ENCODE measurements at regions of chr11 and their contacts with region 1.

Region 1: DNA sequence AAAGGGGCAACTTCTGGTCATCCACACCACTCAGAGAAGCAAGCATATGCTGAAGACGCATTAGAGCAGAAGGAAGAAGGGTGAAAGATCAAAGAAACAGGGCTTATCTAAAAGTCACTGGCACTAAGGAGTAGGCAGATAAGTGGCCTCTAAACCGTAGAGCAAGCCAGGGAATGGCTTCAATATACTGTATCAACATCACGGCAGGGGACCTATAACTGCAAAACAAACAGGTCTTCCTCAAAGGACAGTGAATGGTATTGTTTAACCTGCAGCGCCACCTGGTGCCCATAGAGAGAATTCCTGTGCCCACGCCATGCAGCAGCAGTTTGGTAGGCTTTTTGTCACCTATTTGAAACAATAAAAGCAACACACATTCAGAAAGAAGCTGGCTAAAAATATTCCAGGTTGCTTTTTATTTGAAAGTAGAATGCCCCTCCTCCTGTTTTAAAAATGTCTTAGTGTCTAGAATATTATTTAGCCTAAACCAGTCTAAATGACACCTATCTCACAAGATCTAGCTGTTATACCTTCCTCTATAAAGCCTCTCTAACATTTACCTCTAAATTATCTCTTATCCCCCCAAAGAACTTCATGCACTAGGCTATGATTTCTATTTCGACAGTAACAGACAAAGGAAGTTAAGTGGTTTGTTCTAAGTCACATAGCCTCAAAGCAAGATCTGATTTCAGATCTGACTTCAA is 21.8 kb downstream of the SNX19 start:
- DNase-seq: no peak
- H3K4me3 ChIP-seq: no peak overlapping the region
- CTCF ChIP-seq: peak; percentile 85

Region 2: GRCh38 chr11:130872981-130873380 is 21.5 kb before region 1 on chr11:
- CTCF ChIA-PET with region 1: interaction called, 290 read pairs
- POLR2A ChIA-PET with region 1: no interaction called
- DNase-seq: no peak
- H3K4me3 ChIP-seq: no peak overlapping the region
- CTCF ChIP-seq: no peak